Posterior vena cava (tissue), 2 donors: ENCODE measurements at regions of chr11 and their contacts with region 1.

Region 1: GRCh38 chr11:112185883-112186282 is 10.6 kb downstream of the BCO2 start:
- DNase-seq: no peak

Region 2: GRCh38 chr11:112156956-112157766 is 28.7 kb before region 1 on chr11:
- intact Hi-C with region 1: loop called in 1 of 2 experiments (anchors 2 kb)
- DNase-seq: no peak

Region 3: DNA sequence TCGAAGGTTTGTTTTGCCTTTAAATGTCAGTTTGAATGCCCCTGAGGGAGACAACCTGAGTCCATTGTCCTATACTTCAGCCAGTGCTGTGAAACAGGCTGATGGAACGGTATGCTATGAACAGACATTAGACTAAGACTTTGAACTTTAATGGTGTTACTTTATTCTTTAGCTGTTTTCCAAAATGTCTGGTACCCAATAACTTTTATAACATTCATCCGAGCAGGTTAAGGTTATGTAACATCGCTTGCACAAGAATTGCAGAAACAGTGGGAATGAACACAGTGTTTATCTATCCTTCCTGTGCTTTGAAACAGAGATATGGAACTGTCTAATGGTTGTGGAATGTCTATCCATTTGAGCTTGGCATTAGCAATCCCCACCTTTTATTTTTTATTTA is 27.9 kb after region 1 on chr11:
- intact Hi-C with region 1: no loop called
- DNase-seq: no peak

Region 4: GRCh38 chr11:112610996-112611750 is 425.3 kb after region 1 on chr11:
- intact Hi-C with region 1: no loop called
- DNase-seq: no peak